PC-9 (cell line): ENCODE measurements at regions of chr20 and their contacts with region 1.

Region 1: GRCh38 chr20:39152126-39152525 is 190.0 kb downstream of the DHX35 start:
- DNase-seq: no peak
- H3K4me3 ChIP-seq: no peak overlapping the region
- H3K27ac ChIP-seq: no peak overlapping the region
- H3K4me1 ChIP-seq: no peaks in the 10 kb centered on the region
- H3K27me3 ChIP-seq: peaks cover 91% of the 10 kb centered on the region
- CTCF ChIP-seq: no peak

Region 2: DNA sequence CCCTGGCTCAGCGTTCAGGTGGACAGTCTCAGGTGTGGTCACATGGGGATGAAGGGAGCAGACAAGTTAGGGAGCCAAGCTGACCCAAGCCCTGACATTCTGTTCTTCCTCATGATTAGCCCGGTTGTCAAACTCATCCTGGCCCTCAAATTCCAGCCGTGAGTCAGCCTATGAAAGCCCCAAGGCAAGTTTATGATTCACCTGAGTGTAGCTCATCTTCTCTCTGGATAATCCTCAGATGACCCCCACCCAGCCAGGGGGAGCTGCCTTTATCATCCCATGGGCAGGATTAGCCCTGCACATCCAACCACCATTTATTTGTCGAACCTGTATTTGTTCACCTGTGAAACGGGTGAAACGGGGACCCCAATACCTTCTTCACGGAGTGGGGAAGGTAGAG is 28.1 kb before region 1 on chr20:
- CTCF ChIA-PET with region 1: no interaction called
- POLR2A ChIA-PET with region 1: no interaction called
- intact Hi-C with region 1: no loop called
- DNase-seq: no peak
- H3K4me3 ChIP-seq: no peak overlapping the region
- H3K27ac ChIP-seq: no peak overlapping the region
- H3K4me1 ChIP-seq: no peaks in the 10 kb centered on the region
- H3K27me3 ChIP-seq: peaks cover 25% of the 10 kb centered on the region
- CTCF ChIP-seq: no peak

Region 3: GRCh38 chr20:39264506-39265172 is 112.5 kb after region 1 on chr20:
- CTCF ChIA-PET with region 1: no interaction called
- POLR2A ChIA-PET with region 1: no interaction called
- intact Hi-C with region 1: no loop called
- DNase-seq: peak; percentile 43 to 49
- H3K4me3 ChIP-seq: no peak overlapping the region
- H3K27ac ChIP-seq: no peak overlapping the region
- H3K4me1 ChIP-seq: no peaks in the 10 kb centered on the region
- H3K27me3 ChIP-seq: peaks cover 27% of the 10 kb centered on the region
- CTCF ChIP-seq: peak; percentile 95

Region 4: GRCh38 chr20:39568109-39568508 is 416.0 kb after region 1 on chr20:
- CTCF ChIA-PET with region 1: no interaction called
- POLR2A ChIA-PET with region 1: no interaction called
- intact Hi-C with region 1: no loop called
- DNase-seq: no peak
- H3K4me3 ChIP-seq: no peak overlapping the region
- H3K27ac ChIP-seq: no peak overlapping the region
- H3K4me1 ChIP-seq: no peaks in the 10 kb centered on the region
- H3K27me3 ChIP-seq: no peaks in the 10 kb centered on the region; the same call in 1 of the 2 replicates
- CTCF ChIP-seq: no peak

Region 5: GRCh38 chr20:40738976-40739375 is 1586.8 kb after region 1 on chr20:
- CTCF ChIA-PET with region 1: interaction called, 19 read pairs
- POLR2A ChIA-PET with region 1: no interaction called
- intact Hi-C with region 1: no loop called
- DNase-seq: no peak
- H3K4me3 ChIP-seq: no peak overlapping the region
- H3K27ac ChIP-seq: no peak overlapping the region
- H3K4me1 ChIP-seq: no peaks in the 10 kb centered on the region
- H3K27me3 ChIP-seq: peaks cover 66% of the 10 kb centered on the region
- CTCF ChIP-seq: no peak